Natural killer cell (primary cell): ENCODE measurements at regions of chr10 and their contacts with region 1.

Region 1: DNA sequence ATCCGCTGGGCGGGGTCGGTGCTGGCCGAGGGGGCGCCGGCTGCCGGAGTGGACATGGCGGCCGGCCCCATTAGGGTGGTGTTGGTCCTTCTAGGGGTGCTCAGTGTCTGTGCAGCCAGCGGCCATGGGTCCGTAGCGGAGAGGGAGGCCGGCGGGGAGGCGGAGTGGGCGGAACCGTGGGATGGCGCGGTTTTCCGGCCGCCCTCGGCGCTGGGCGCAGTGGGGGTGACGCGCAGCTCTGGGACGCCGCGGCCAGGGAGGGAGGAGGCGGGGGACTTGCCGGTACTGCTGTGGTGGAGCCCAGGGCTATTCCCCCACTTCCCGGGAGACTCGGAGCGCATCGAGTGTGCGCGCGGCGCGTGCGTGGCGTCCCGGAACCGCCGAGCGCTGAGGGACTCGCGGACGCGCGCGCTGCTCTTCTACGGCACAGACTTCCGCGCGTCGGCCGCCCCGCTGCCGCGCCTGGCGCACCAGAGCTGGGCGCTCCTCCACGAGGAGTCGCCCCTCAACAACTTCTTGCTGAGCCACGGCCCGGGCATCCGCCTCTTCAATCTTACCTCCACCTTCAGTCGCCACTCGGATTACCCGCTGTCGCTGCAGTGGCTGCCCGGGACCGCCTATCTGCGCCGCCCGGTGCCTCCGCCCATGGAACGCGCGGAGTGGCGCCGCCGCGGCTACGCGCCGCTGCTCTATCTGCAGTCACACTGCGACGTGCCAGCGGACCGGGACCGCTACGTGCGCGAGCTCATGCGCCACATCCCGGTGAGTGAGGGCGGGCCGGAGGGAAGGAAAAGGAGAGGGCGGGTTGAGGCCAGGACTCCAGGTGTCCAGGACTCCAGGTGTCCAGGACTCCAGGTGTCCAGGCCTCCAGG is 9.3 kb upstream of the CHCHD1 start:
- DNase-seq: peak; percentile 77 to 94
- ATAC-seq: peak; percentile 61 to 81 (median 67)
- H3K4me3 ChIP-seq: peak overlapping the region; percentile 67
- H3K4me3 Mint-ChIP-seq: peak overlapping the region; percentile 97
- H3K27ac ChIP-seq: peak overlapping the region; percentile 95
- H3K27ac Mint-ChIP-seq: peak overlapping the region; percentile 84 to 96
- H3K4me1 ChIP-seq: peaks cover 38% of the 10 kb centered on the region
- H3K4me1 Mint-ChIP-seq: peaks cover 47 to 61% of the 10 kb centered on the region in 2 donors
- H3K27me3 ChIP-seq: no peaks in the 10 kb centered on the region
- H3K27me3 Mint-ChIP-seq: no peaks in the 10 kb centered on the region
- CTCF ChIP-seq: no peak

Region 2: DNA sequence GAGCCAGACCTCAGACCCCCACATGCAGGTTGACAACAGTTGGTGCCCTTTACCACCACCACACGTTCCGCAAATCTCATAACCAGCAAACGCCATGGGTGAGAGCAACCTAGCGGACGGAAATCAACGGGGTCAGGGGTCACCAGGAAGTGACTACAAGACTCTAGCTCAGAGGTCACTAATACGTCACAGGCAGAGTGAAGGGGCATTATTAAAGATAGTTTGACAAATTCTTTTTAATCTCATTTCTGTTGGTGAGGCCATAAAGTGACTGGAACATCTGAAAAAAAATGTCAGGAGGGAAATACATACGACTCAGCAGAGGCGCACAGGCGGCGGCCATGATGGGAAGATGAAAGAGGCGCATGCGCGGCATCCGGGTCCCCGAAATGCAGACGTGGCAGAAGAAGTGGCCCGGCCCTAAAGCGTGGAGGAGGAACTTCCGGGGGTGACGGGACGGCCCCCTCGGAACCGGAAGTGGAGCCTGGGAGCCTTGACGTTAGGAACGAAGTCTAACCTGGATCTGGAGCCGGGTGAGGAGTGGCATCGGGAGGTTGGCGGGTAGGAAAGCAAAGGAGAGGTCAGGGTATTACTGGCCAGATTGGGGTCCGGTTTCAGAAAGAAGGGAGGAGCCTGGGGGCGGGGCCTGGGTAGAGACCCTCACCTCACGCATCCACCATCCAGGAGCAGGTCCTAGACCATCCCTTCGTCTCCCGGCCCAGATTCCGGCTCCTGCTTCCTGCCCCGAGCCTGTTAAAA is 28.4 kb before region 1 on chr10 and contains the start of gene SEC24C:
- intact Hi-C with region 1: loop called (anchors 2 kb)
- DNase-seq: peak; percentile 95 to 99
- ATAC-seq: peak; percentile 88 to 95 (median 88)
- H3K4me3 ChIP-seq: peak within 1 kb of the TSS; percentile 73
- H3K4me3 Mint-ChIP-seq: peak within 1 kb of the TSS; percentile 100
- H3K27ac ChIP-seq: peak within 1 kb of the TSS; percentile 92
- H3K27ac Mint-ChIP-seq: peak within 1 kb of the TSS; percentile 98 to 99
- H3K4me1 ChIP-seq: peaks cover 27% of the 10 kb centered on the region
- H3K4me1 Mint-ChIP-seq: peaks cover 30 to 35% of the 10 kb centered on the region in 2 donors
- H3K27me3 ChIP-seq: no peaks in the 10 kb centered on the region
- H3K27me3 Mint-ChIP-seq: no peaks in the 10 kb centered on the region
- CTCF ChIP-seq: no peak
- total RNA-seq, gene SEC24C: 153 to 161 (median 160) TPM

Region 3: DNA sequence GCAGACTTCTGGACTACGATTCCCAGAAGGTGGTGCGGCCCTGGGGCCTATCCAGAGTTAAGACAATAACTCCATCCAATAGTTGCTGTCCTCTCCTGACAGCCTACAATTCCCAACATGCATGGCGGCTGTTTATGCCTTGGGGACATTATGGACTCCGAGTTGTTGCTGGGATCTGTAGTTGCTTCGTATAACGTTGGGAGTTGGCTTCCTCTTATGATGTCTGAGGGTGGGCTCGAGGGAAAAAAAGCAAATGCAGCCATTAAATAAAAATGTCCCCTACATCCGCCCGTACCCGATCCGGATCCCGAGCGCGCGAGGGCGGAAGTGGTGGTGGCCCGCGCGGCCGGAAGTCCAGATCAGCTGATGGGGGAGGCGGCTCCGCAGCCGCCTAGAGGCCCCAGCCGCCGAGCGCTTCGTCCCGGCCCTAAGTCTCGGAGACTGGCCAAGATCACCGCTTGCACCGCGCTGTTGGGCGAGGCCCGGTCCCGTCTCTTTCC is 12.8 kb after region 1 on chr10 and contains the start of gene ZSWIM8:
- intact Hi-C with region 1: loop called (anchors 1 kb)
- DNase-seq: peak; percentile 80 to 94
- ATAC-seq: peak; percentile 84 to 94 (median 84)
- H3K4me3 ChIP-seq: peak within 1 kb of the TSS; percentile 48
- H3K4me3 Mint-ChIP-seq: peak within 1 kb of the TSS; percentile 96
- H3K27ac ChIP-seq: peak within 1 kb of the TSS; percentile 69
- H3K27ac Mint-ChIP-seq: peak within 1 kb of the TSS; percentile 90 to 96
- H3K4me1 ChIP-seq: peaks cover 33% of the 10 kb centered on the region
- H3K4me1 Mint-ChIP-seq: peaks cover 51 to 60% of the 10 kb centered on the region in 2 donors
- H3K27me3 ChIP-seq: no peaks in the 10 kb centered on the region
- H3K27me3 Mint-ChIP-seq: no peaks in the 10 kb centered on the region
- CTCF ChIP-seq: no peak
- total RNA-seq, gene ZSWIM8: 157 to 161 (median 159) TPM

Region 4: DNA sequence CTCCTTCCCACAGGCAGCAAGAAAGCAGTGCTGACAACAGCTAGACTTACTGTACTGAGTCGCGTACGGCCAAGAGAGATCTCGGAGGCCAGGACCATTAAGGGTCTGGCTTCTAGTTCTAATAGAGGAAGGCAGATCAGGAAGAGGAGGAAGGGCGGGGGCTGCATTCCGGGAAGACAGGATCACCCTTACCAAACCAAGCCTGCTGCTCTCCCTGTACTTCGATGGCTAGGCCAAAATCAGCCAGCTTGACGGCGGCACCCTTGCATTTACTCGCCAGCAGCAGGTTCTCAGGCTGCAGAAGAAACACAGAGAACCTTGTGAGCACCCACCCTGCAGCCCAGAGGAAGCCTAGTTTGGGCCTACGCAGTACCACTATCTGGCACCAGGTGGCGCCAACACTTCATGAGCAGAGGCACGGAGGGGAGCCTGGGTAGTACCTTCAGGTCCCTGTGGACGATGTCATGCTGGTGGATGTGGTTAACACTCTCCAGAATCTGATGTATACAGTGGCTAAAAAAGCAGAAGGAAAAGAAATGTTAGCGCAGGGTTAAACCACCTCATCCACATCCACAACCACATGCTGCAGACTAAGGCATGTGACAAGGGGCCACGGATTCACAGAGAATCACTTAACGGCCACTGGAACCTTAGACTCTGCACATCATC is 76.4 kb after region 1 on chr10:
- intact Hi-C with region 1: loop called (anchors 1 kb)
- DNase-seq: peak; percentile 94 to 96
- ATAC-seq: peak; percentile 98 to 99 (median 99)
- H3K4me3 ChIP-seq: no peak overlapping the region
- H3K4me3 Mint-ChIP-seq: peak overlapping the region; percentile 79
- H3K27ac ChIP-seq: peak overlapping the region; percentile 27
- H3K27ac Mint-ChIP-seq: peak overlapping the region; percentile 75 to 87
- H3K4me1 ChIP-seq: peaks cover 18% of the 10 kb centered on the region
- H3K4me1 Mint-ChIP-seq: peaks cover 16 to 22% of the 10 kb centered on the region in 2 donors
- H3K27me3 ChIP-seq: no peaks in the 10 kb centered on the region
- H3K27me3 Mint-ChIP-seq: no peaks in the 10 kb centered on the region
- CTCF ChIP-seq: peak; percentile 97

Region 5: DNA sequence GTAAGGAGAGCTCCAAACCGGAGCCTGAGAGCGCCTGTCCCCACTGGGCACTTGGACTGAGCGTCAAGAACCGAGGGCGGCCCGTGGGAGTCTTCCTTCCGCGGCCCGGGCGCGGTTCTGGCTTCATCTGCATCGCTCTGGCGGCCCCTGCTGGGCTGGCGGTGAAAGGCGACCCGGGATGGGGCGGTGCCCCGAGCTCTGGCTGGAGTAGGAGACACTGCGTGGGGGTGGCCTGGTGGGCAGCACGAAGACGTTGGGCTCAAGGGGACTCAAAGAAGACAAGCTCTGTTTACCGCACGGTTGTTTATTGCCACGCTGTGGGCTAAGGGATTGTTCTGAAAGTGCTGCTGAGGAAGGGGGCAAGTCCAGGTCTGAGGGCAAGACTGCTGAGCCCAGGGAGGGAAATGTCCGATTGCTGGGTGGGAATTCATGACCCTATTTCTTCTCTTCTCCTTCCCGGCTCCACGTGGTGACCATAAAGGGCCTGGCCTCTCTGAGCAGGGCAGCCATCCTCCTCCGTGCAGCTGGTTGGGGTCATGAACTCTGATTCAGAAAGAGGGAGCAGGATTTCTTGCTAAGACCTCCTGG is 168.2 kb after region 1 on chr10:
- intact Hi-C with region 1: loop called (anchors 5 kb)
- DNase-seq: peak; percentile 83 to 85
- ATAC-seq: peak; percentile 98 to 100 (median 100)
- H3K4me3 ChIP-seq: no peak overlapping the region
- H3K4me3 Mint-ChIP-seq: peak overlapping the region; percentile 78
- H3K27ac ChIP-seq: no peak overlapping the region
- H3K27ac Mint-ChIP-seq: peak overlapping the region in 1 of 2 donors; percentile 73
- H3K4me1 ChIP-seq: peaks cover 10% of the 10 kb centered on the region
- H3K4me1 Mint-ChIP-seq: peaks cover 8 to 9% of the 10 kb centered on the region in 2 donors
- H3K27me3 ChIP-seq: no peaks in the 10 kb centered on the region
- H3K27me3 Mint-ChIP-seq: no peaks in the 10 kb centered on the region
- CTCF ChIP-seq: peak; percentile 94

Region 6: GRCh38 chr10:74058658-74059057 is 286.1 kb after region 1 on chr10:
- intact Hi-C with region 1: no loop called
- DNase-seq: peak in 1 of 2 donors; percentile 59
- ATAC-seq: peak; percentile 59 to 83 (median 77)
- H3K4me3 ChIP-seq: no peak overlapping the region
- H3K4me3 Mint-ChIP-seq: no peak overlapping the region
- H3K27ac ChIP-seq: no peak overlapping the region
- H3K27ac Mint-ChIP-seq: peak overlapping the region; percentile 64 to 84
- H3K4me1 ChIP-seq: peaks cover 19% of the 10 kb centered on the region
- H3K4me1 Mint-ChIP-seq: peaks cover 51 to 54% of the 10 kb centered on the region in 2 donors
- H3K27me3 ChIP-seq: no peaks in the 10 kb centered on the region
- H3K27me3 Mint-ChIP-seq: no peaks in the 10 kb centered on the region
- CTCF ChIP-seq: no peak